Natural killer cell (primary cell): ENCODE measurements at regions of chr17 and their contacts with region 1.

Region 1: GRCh38 chr17:78736526-78737079 is 45.5 kb downstream of the CYTH1 start:
- DNase-seq: peak; percentile 53 to 84
- ATAC-seq: peak; percentile 63 to 82 (median 77)
- H3K4me3 ChIP-seq: peak overlapping the region; percentile 67
- H3K4me3 Mint-ChIP-seq: peak overlapping the region; percentile 95
- H3K27ac ChIP-seq: peak overlapping the region; percentile 75
- H3K27ac Mint-ChIP-seq: peak overlapping the region; percentile 93
- H3K4me1 ChIP-seq: peaks cover 69% of the 10 kb centered on the region
- H3K4me1 Mint-ChIP-seq: peaks cover 91% of the 10 kb centered on the region in 2 donors
- H3K27me3 ChIP-seq: no peaks in the 10 kb centered on the region
- H3K27me3 Mint-ChIP-seq: no peaks in the 10 kb centered on the region
- CTCF ChIP-seq: no peak

Region 2: GRCh38 chr17:78723957-78724943 is 12.4 kb before region 1 on chr17:
- intact Hi-C with region 1: loop called (anchors 2 kb)
- DNase-seq: no peak
- ATAC-seq: peak in 1 of 3 donors; percentile 20
- H3K4me3 ChIP-seq: no peak overlapping the region
- H3K4me3 Mint-ChIP-seq: peak overlapping the region; percentile 84
- H3K27ac ChIP-seq: peak overlapping the region; percentile 35
- H3K27ac Mint-ChIP-seq: peak overlapping the region; percentile 93 to 94
- H3K4me1 ChIP-seq: peaks cover 92% of the 10 kb centered on the region
- H3K4me1 Mint-ChIP-seq: peaks cover 89 to 92% of the 10 kb centered on the region in 2 donors
- H3K27me3 ChIP-seq: no peaks in the 10 kb centered on the region
- H3K27me3 Mint-ChIP-seq: no peaks in the 10 kb centered on the region
- CTCF ChIP-seq: no peak

Region 3: GRCh38 chr17:78789663-78790181 is 53.1 kb after region 1 on chr17:
- intact Hi-C with region 1: no loop called
- DNase-seq: peak in 1 of 2 donors; percentile 84
- ATAC-seq: peak; percentile 50 to 71 (median 62)
- H3K4me3 ChIP-seq: no peak overlapping the region
- H3K4me3 Mint-ChIP-seq: peak overlapping the region; percentile 47
- H3K27ac ChIP-seq: peak overlapping the region; percentile 71
- H3K27ac Mint-ChIP-seq: peak overlapping the region; percentile 83 to 86
- H3K4me1 ChIP-seq: peaks cover 87% of the 10 kb centered on the region
- H3K4me1 Mint-ChIP-seq: peaks cover 67 to 75% of the 10 kb centered on the region in 2 donors
- H3K27me3 ChIP-seq: no peaks in the 10 kb centered on the region
- H3K27me3 Mint-ChIP-seq: no peaks in the 10 kb centered on the region
- CTCF ChIP-seq: no peak

Region 4: DNA sequence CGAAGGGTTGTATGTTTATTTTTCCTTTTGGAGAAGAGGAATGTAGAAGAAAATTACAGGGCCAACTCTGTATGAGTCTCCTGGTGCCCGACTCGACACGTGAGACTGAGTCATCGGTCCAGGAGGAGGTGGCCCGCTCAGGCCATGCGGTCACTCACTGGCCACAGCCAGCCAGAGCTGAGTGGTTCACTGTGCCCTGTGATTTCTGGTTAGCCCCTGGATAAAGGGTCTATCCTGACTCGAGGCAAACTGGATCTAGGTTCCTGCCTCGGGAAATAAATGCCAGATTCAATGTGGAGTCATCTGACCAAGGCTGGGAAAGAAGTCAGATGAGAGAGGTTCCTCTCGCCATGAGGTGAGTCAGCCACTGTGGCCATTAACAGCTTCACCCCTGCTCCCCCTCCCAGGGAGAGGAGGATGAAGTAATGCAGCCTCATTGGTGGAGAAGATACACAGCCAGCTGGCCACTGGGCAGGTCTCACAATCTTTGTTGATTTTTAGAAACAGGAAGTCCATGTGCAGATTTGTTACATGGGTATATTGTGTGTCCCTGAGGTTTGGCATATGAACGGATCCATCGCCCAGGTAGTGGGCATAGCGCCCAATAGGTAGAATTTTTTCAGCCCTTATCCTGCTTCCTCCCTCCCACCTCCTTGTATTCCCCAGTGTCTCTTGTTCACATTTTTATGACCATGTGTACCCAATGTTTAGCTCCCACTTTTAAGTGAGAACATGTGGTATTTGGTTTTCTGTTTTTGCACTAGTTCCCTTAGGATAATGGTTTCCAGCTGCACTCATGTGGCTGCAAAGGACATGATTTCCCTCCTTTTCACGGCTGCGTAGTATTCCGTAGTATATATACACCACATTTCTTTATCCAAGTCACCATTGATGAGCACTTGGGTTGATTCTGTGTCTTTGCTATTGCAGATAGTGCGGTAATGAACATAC is 125.7 kb after region 1 on chr17:
- intact Hi-C with region 1: no loop called
- DNase-seq: no peak
- ATAC-seq: peak; percentile 18 to 46 (median 36)
- H3K4me3 ChIP-seq: no peak overlapping the region
- H3K4me3 Mint-ChIP-seq: no peak overlapping the region
- H3K27ac ChIP-seq: no peak overlapping the region
- H3K27ac Mint-ChIP-seq: no peak overlapping the region
- H3K4me1 ChIP-seq: peaks cover 2% of the 10 kb centered on the region
- H3K4me1 Mint-ChIP-seq: no peaks in the 10 kb centered on the region
- H3K27me3 ChIP-seq: no peaks in the 10 kb centered on the region
- H3K27me3 Mint-ChIP-seq: peaks cover 0 to 6% of the 10 kb centered on the region in 2 donors
- CTCF ChIP-seq: no peak

Region 5: GRCh38 chr17:78910497-78911284 is 174.1 kb after region 1 on chr17:
- intact Hi-C with region 1: no loop called
- DNase-seq: no peak
- ATAC-seq: peak in 1 of 3 donors; percentile 53
- H3K4me3 ChIP-seq: no peak overlapping the region
- H3K4me3 Mint-ChIP-seq: no peak overlapping the region
- H3K27ac ChIP-seq: no peak overlapping the region
- H3K27ac Mint-ChIP-seq: no peak overlapping the region
- H3K4me1 ChIP-seq: peaks cover 13% of the 10 kb centered on the region
- H3K4me1 Mint-ChIP-seq: no peaks in the 10 kb centered on the region
- H3K27me3 ChIP-seq: no peaks in the 10 kb centered on the region
- H3K27me3 Mint-ChIP-seq: no peaks in the 10 kb centered on the region
- CTCF ChIP-seq: no peak